Activated T-helper 1 cell treated with anti-CD3 and anti-CD28 coated beads, Interleukin-12 subunit alpha, Interleukin-12 subunit beta, Interleukin-2, Interleukin-4 antibody, amounts not matched to agents 30 ng/mL and 10 ng/mL and 1 ng/mL, durations not matched to agents 14 hours and 24 hours and 36 hours (primary cell): ENCODE measurements at regions of chr19 and their contacts with region 1.

Region 1: GRCh38 chr19:1592755-1593500 is at the start of gene MBD3:
- DNase-seq: peak; percentile 87
- H3K4me3 Mint-ChIP-seq: peak within 1 kb of the TSS; percentile 91
- H3K27ac Mint-ChIP-seq: peak within 1 kb of the TSS; percentile 91
- H3K4me1 Mint-ChIP-seq: peaks cover 20% of the 10 kb centered on the region
- H3K27me3 Mint-ChIP-seq: no peaks in the 10 kb centered on the region
- total RNA-seq, gene MBD3: 136 and 139 TPM in 2 replicates

Region 2: GRCh38 chr19:1189419-1189818 is 403.5 kb before region 1 on chr19:
- intact Hi-C with region 1: no loop called
- DNase-seq: peak; percentile 56
- H3K4me3 Mint-ChIP-seq: peak overlapping the region; percentile 46
- H3K27ac Mint-ChIP-seq: peak overlapping the region; percentile 83
- H3K4me1 Mint-ChIP-seq: peaks cover 34% of the 10 kb centered on the region
- H3K27me3 Mint-ChIP-seq: no peaks in the 10 kb centered on the region

Region 3: GRCh38 chr19:1513499-1514294 is 79.2 kb before region 1 on chr19:
- intact Hi-C with region 1: no loop called
- DNase-seq: peak; percentile 57
- H3K4me3 Mint-ChIP-seq: no peak overlapping the region
- H3K27ac Mint-ChIP-seq: no peak overlapping the region
- H3K4me1 Mint-ChIP-seq: no peaks in the 10 kb centered on the region
- H3K27me3 Mint-ChIP-seq: peaks cover 12% of the 10 kb centered on the region

Region 4: DNA sequence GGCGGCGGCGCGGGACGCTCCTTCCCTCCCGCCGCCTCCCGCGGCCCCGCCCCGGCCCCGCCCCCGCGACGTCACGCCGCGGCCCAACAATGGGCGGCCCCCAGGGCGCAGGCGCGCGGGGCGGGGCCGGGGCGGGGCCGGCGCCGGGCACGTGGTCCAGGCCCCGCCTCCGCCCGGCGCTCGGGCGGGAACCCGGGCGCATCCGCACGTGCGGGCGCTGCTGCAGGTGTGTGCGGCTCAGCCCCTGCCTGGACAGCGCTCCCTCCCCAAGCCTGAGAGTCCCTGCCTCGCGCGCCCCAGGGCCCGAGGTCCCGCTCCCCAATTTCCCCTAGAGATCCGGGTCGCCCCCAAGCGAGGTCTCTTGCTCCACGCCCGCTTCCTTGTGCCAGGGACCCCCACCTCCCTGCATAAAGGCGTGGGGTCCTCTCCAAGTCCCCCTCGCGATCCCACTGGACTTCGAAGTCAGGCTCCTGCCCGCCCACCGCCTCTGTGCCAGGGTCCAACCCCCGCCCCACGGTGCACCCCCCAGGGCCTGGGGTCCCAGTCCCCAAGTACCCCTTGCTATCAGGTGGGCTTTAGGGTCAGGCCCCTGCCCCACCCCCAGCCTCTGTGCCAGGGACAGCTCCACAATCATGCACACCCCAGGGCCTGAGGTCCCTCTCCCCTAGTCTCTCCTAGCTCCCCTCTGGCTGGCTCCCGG is 24.5 kb before region 1 on chr19 and contains the start of gene MEX3D:
- intact Hi-C with region 1: loop called (anchors 2 kb)
- DNase-seq: peak; percentile 67
- H3K4me3 Mint-ChIP-seq: peak within 1 kb of the TSS; percentile 56
- H3K27ac Mint-ChIP-seq: peak within 1 kb of the TSS; percentile 23
- H3K4me1 Mint-ChIP-seq: no peaks in the 10 kb centered on the region
- H3K27me3 Mint-ChIP-seq: peaks cover 18% of the 10 kb centered on the region
- total RNA-seq, gene MEX3D: 14.6 and 15.0 TPM in 2 replicates

Region 5: GRCh38 chr19:1652471-1653299 is 59.8 kb after region 1 on chr19 and contains the start of gene TCF3:
- intact Hi-C with region 1: loop called (anchors 1 kb)
- DNase-seq: peak; percentile 98
- H3K4me3 Mint-ChIP-seq: peak within 1 kb of the TSS; percentile 95
- H3K27ac Mint-ChIP-seq: peak within 1 kb of the TSS; percentile 97
- H3K4me1 Mint-ChIP-seq: peaks cover 16% of the 10 kb centered on the region
- H3K27me3 Mint-ChIP-seq: peaks cover 1% of the 10 kb centered on the region
- total RNA-seq, gene TCF3: 163 and 172 TPM in 2 replicates